ENCODE measurements at regions of chr18 and their contacts with region 1.

Region 1: DNA sequence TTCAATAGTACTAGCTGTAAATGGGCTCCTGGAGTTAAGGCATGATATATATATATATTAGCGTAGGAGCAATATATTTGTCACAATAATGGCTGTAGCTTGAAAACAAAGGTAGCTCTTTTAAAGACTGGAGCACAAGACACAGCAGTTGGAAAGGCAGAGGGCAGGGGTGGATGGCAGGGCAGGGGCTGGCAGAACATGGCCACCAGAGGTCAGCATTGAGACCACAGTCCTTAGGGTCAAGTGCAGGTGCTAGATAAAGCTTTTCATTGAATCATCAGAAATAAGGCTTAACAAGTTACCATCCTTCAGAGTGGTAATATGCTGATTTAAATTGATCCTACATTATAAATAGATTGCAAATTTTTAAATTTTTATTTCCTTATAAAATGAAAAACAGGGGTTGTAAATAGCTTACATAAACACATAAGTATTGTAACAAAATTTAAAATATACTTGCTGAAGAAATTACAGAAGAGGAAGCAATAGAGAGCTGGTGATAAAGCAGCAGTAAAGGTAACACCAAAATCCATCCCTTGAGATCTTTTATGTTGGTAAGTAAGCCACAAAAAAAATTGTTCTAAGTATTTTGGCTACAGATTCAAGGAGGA is 161.2 kb upstream of the PIEZO2 start:
- DNase-seq: no peak
- ATAC-seq: peak; percentile 93
- H3K4me3 ChIP-seq: no peak overlapping the region
- H3K27ac ChIP-seq: no peak overlapping the region
- H3K4me1 ChIP-seq: peaks cover 5% of the 10 kb centered on the region; the same call in 1 of the 2 replicates
- H3K27me3 ChIP-seq: peaks cover 0 to 4% of the 10 kb centered on the region in 2 experiments; a peak in 2 of 4 replicates
- CTCF ChIP-seq: peak; percentile 62 to 86 (median 83)
- EP300 ChIP-seq: no peak
- POLR2A ChIP-seq: no peak
- RAD21 ChIP-seq: peak; percentile 65

Region 2: DNA sequence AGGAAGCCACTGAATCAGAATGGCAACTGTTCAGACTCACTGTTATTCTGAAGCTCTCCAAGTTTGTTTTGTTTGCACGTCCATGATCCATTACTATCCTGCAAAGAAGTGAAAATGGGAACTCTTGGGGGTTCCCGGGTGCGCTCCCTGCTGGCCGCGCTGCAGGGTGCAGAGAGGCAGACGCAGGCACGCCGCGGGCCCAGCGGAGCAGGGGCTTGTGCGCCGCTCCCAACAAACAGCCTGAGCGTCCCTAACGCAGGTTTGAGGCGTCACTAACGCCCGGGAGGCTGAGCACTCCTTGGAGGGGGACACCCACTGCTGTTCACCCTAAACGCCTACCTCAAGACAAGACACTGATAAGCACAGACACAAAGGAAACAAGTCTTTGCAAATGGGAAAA is 146.9 kb before region 1 on chr18:
- CTCF ChIA-PET with region 1: interaction called, 14 read pairs
- POLR2A ChIA-PET with region 1: no interaction called
- RAD21 ChIA-PET with region 1: interaction called, 5 read pairs
- SMC1A ChIA-PET with region 1: interaction called, 4 read pairs
- in situ Hi-C with region 1: no loop called
- intact Hi-C with region 1: loop called (anchors 5 kb)
- DNase-seq: no peak
- ATAC-seq: peak; percentile 94
- H3K4me3 ChIP-seq: no peak overlapping the region
- H3K27ac ChIP-seq: no peak overlapping the region
- H3K4me1 ChIP-seq: peaks cover 9% of the 10 kb centered on the region
- H3K27me3 ChIP-seq: no peaks in the 10 kb centered on the region
- CTCF ChIP-seq: peak; percentile 61 to 88 (median 62)
- EP300 ChIP-seq: no peak
- POLR2A ChIP-seq: no peak
- RAD21 ChIP-seq: peak; percentile 25; the same call in 1 of the 2 replicates

Region 3: DNA sequence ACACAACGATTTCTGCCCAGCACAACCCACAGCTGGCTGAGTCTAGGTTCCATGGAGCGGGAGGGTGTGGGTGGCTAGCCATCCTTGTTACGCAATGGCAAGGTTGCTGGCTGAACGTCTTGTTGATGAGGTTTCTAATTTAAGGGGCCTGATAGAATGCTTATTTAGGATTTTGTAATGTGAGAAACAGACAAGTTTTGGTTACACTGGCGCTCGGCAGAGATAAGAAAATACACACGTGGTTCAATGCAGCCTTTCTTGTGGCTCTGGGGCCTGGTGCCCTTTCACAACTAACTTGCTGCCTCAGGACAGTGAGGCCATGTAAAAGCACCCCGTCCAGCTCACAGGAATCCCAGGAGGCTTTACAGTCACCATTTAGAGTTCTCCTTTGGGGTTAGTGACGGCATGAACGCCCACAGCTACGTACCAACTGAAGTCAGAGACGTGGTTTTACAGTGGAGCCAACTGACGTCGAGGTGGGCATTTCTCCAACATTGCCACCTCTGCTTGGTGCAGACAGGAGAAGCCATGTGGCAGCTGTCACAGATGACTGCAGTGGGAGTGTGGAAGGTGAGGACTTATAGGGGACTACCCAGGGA is 131.5 kb before region 1 on chr18:
- CTCF ChIA-PET with region 1: no interaction called
- POLR2A ChIA-PET with region 1: no interaction called
- RAD21 ChIA-PET with region 1: no interaction called
- SMC1A ChIA-PET with region 1: no interaction called
- in situ Hi-C with region 1: no loop called
- intact Hi-C with region 1: no loop called
- DNase-seq: no peak
- ATAC-seq: no peak
- H3K4me3 ChIP-seq: no peak overlapping the region
- H3K27ac ChIP-seq: no peak overlapping the region
- H3K4me1 ChIP-seq: no peaks in the 10 kb centered on the region
- H3K27me3 ChIP-seq: peaks cover 0 to 2% of the 10 kb centered on the region in 2 experiments; a peak in 1 of 4 replicates
- CTCF ChIP-seq: no peak
- EP300 ChIP-seq: no peak
- POLR2A ChIP-seq: no peak
- RAD21 ChIP-seq: no peak

Region 4: GRCh38 chr18:11324956-11325873 is 14.6 kb after region 1 on chr18:
- CTCF ChIA-PET with region 1: interaction called, 18 read pairs
- POLR2A ChIA-PET with region 1: no interaction called
- RAD21 ChIA-PET with region 1: interaction called, 6 read pairs
- SMC1A ChIA-PET with region 1: interaction called, 6 read pairs
- in situ Hi-C with region 1: no loop called
- intact Hi-C with region 1: no loop called
- DNase-seq: peak; percentile 63
- ATAC-seq: peak; percentile 98
- H3K4me3 ChIP-seq: no peak overlapping the region
- H3K27ac ChIP-seq: no peak overlapping the region; the same call in 1 of the 2 replicates
- H3K4me1 ChIP-seq: peaks cover 17% of the 10 kb centered on the region
- H3K27me3 ChIP-seq: no peaks in the 10 kb centered on the region
- CTCF ChIP-seq: no peak
- EP300 ChIP-seq: peak in 1 of 2 experiments; percentile 49; a peak in 1 of 4 replicates
- POLR2A ChIP-seq: no peak
- RAD21 ChIP-seq: no peak

Region 5: GRCh38 chr18:11512096-11513030 is 201.8 kb after region 1 on chr18:
- CTCF ChIA-PET with region 1: interaction called, 65 read pairs
- POLR2A ChIA-PET with region 1: no interaction called
- RAD21 ChIA-PET with region 1: interaction called, 3 read pairs
- SMC1A ChIA-PET with region 1: interaction called, 9 read pairs
- in situ Hi-C with region 1: no loop called
- intact Hi-C with region 1: no loop called
- DNase-seq: no peak
- ATAC-seq: peak; percentile 55
- H3K4me3 ChIP-seq: peak overlapping the region; percentile 29; the same call in 1 of the 2 replicates
- H3K27ac ChIP-seq: peak overlapping the region; percentile 71
- H3K4me1 ChIP-seq: peaks cover 16% of the 10 kb centered on the region
- H3K27me3 ChIP-seq: no peaks in the 10 kb centered on the region
- CTCF ChIP-seq: peak; percentile 3 to 31 (median 30); a peak in 3 of 6 replicates
- EP300 ChIP-seq: no peak
- POLR2A ChIP-seq: no peak
- RAD21 ChIP-seq: peak; percentile 54

Region 6: GRCh38 chr18:11553098-11553940 is 242.7 kb after region 1 on chr18:
- CTCF ChIA-PET with region 1: interaction called, 45 read pairs
- POLR2A ChIA-PET with region 1: no interaction called
- RAD21 ChIA-PET with region 1: interaction called, 23 read pairs
- SMC1A ChIA-PET with region 1: interaction called, 7 read pairs
- in situ Hi-C with region 1: loop called (anchors 10 kb)
- intact Hi-C with region 1: loop called (anchors 1 kb)
- DNase-seq: no peak
- ATAC-seq: peak; percentile 90
- H3K4me3 ChIP-seq: no peak overlapping the region
- H3K27ac ChIP-seq: no peak overlapping the region
- H3K4me1 ChIP-seq: no peaks in the 10 kb centered on the region
- H3K27me3 ChIP-seq: peaks cover 2 to 3% of the 10 kb centered on the region in 2 experiments; a peak in 3 of 4 replicates
- CTCF ChIP-seq: peak; percentile 83 to 91 (median 91)
- EP300 ChIP-seq: no peak
- POLR2A ChIP-seq: no peak
- RAD21 ChIP-seq: peak; percentile 87